Sciatic nerve (tissue), 2 donors: ENCODE measurements at regions of chr13 and their contacts with region 1.

Region 1: GRCh38 chr13:24020375-24020830 is 123.1 kb upstream of the C1QTNF9B start:
- DNase-seq: no peak
- ATAC-seq: peak; percentile 69

Region 2: DNA sequence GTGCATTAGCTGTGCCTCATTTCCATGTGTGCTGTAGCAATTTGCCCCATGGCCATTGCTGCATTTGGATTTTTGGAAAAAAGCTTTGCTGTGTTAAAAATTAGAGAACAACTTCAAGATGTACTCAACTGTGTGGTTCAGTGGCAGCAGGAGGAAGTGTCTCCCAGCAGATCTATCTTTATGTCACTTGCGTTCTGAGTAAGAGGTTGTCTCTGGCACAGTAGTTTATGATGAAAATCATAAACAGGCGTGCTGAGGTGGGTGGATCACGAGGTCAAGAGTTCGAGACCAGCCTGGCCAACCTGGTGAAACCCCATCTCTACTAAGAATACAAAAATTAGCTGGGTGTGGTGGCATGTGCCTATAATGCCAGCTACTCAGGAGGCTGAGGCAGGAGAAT is 714.5 kb after region 1 on chr13:
- intact Hi-C with region 1: loop called (anchors 5 kb)
- DNase-seq: no peak
- ATAC-seq: no peak